Right cardiac atrium (tissue), 5 donors: ENCODE measurements at regions of chr5 and their contacts with region 1.

Region 1: DNA sequence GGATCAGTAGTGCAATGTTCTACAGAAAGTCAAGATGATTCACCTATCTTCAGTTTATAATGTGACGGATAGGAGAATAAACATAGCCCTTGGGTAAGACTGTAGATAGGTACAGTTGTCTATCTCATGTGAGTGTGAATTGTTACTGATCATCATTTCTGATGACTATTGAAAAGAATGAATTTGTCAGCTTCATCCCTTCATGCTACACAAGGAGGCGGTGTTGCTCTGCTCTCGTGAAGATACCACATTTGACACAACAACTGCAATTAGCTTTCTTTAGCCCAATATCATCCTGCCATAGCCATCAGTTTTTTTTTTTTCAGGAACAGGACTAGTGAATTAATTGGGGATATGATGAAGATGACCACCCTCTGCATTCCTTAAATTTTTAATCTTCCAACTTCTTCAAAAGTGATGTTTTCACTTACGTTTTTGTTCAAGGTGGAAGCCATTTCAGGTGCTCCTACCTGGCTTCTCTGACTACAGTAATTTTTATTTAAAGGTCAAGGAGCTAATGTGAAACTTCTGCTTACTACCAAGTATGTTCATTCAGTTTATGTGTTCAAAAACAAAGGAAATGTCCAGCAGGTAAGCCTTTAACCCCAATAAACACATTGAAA is 152.9 kb upstream of the MOCS2 start:
- DNase-seq: peak in 2 of 3 donors; percentile 21 to 64
- ATAC-seq: peak in 1 of 2 donors; percentile 56
- H3K4me3 ChIP-seq: no peak overlapping the region
- H3K27ac ChIP-seq: no peak overlapping the region
- H3K4me1 ChIP-seq: no peaks in the 10 kb centered on the region
- H3K27me3 ChIP-seq: no peaks in the 10 kb centered on the region

Region 2: GRCh38 chr5:53430261-53431252 is 168.1 kb after region 1 on chr5:
- intact Hi-C with region 1: loop called in 1 of 4 experiments (anchors 10 kb)
- DNase-seq: no peak
- ATAC-seq: peak in 1 of 2 donors; percentile 59
- H3K4me3 ChIP-seq: no peak overlapping the region
- H3K27ac ChIP-seq: no peak overlapping the region
- H3K4me1 ChIP-seq: no peaks in the 10 kb centered on the region
- H3K27me3 ChIP-seq: no peaks in the 10 kb centered on the region